ENCODE measurements at regions of chr10 and their contacts with region 1.

Region 1: DNA sequence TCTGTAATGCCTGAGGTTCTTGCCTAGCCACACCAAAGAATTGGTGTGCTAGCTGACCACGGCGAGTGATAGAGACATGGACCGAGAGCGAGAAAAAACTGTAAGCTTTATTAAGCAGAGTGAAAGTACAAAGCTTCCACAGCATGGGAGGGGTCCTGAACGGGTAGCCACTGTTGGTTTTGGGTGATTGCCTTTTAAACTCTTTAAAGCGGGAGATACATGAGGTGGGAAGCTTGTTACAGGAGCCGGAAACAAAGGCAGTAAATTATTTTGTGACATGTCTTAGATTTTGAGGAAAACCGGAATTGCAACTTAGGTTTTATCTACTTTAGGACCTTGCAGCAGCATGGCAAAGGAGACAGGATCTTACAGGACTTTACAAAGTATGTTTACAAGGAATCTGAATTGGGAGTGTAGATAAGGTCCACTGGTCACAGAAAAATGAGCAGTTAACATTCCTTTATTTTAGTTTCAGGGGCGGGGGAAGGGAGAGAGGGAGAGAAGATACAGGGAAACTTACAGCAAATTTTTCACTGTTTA is 252.7 kb upstream of the MBL2 start:
- DNase-seq: peak; percentile 85
- ATAC-seq: peak; percentile 81
- H3K4me3 ChIP-seq: peak overlapping the region; percentile 60
- H3K27ac ChIP-seq: peak overlapping the region; percentile 9
- H3K4me1 ChIP-seq: peaks cover 40% of the 10 kb centered on the region
- H3K27me3 ChIP-seq: no peaks in the 10 kb centered on the region
- CTCF ChIP-seq: no peak

Region 2: GRCh38 chr10:53003094-53003493 is 22.1 kb before region 1 on chr10:
- CTCF ChIA-PET with region 1: no interaction called
- POLR2A ChIA-PET with region 1: no interaction called
- intact Hi-C with region 1: no loop called
- DNase-seq: peak; percentile 92
- ATAC-seq: peak; percentile 60; the same call in 1 of the 2 replicates
- H3K4me3 ChIP-seq: no peak overlapping the region
- H3K27ac ChIP-seq: peak overlapping the region; percentile 42
- H3K4me1 ChIP-seq: peaks cover 31% of the 10 kb centered on the region
- H3K27me3 ChIP-seq: no peaks in the 10 kb centered on the region
- CTCF ChIP-seq: no peak

Region 3: DNA sequence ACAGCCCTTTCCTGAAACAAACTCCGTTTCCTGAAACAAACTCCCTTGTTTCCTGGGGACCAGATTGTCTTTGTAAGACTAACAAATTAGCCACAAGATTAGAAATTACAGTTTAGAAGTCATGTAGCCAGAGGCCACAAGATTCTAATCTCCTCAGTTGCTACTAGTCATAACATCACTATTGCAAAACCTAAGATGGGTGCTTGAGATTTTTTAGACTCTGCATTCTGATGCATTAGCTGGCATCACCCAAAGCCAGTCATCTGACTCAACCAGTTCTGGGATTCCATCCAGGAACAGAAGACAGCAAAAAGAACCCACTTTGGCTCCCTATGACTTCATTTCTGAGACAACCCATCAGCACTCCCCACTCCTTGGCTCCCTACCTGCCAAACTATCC is 115.3 kb after region 1 on chr10:
- CTCF ChIA-PET with region 1: no interaction called
- POLR2A ChIA-PET with region 1: no interaction called
- intact Hi-C with region 1: loop called (anchors 5 kb)
- DNase-seq: peak; percentile 94
- ATAC-seq: peak; percentile 73
- H3K4me3 ChIP-seq: no peak overlapping the region
- H3K27ac ChIP-seq: peak overlapping the region; percentile 41
- H3K4me1 ChIP-seq: peaks cover 8% of the 10 kb centered on the region
- H3K27me3 ChIP-seq: no peaks in the 10 kb centered on the region
- CTCF ChIP-seq: no peak

Measured in PC-3 (cell line).